Transverse colon (tissue), 4 donors: ENCODE measurements at regions of chr11 and their contacts with region 1.

Region 1: GRCh38 chr11:134749040-134749839 is 337.2 kb upstream of the B3GAT1 start:
- DNase-seq: no peak
- H3K4me3 ChIP-seq: no peak overlapping the region
- H3K27ac ChIP-seq: no peak overlapping the region
- H3K4me1 ChIP-seq: no peaks in the 10 kb centered on the region
- H3K27me3 ChIP-seq: peaks cover 14% of the 10 kb centered on the region
- CTCF ChIP-seq: no peak
- EP300 ChIP-seq: no peak
- POLR2A ChIP-seq: no peak

Region 2: DNA sequence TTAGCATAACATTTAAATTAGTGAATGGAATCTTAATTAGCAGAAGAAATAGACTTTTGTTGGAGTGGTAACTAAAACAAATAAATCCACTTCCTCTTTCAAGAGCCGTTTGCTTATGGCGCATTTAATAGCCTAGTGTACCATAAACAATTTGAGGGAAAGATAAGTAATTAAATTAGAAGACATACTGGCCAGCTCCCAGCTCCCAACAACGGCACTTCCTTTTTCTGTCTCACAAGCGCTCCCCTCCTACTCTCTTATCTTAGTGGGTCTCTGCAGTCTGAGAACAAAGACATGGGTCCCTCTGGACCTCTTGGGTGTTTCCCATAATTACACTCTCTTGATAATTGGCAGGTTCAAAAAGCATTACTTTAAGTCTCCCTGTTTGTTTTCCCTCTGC is 1363.0 kb before region 1 on chr11:
- in situ Hi-C with region 1: no loop called
- intact Hi-C with region 1: loop called (anchors 5 kb)
- DNase-seq: no peak
- H3K4me3 ChIP-seq: no peak overlapping the region
- H3K27ac ChIP-seq: no peak overlapping the region
- H3K4me1 ChIP-seq: peaks cover 0 to 11% (median 2%) of the 10 kb centered on the region in 4 donors
- H3K27me3 ChIP-seq: no peaks in the 10 kb centered on the region
- CTCF ChIP-seq: no peak
- EP300 ChIP-seq: no peak
- POLR2A ChIP-seq: no peak

Region 3: DNA sequence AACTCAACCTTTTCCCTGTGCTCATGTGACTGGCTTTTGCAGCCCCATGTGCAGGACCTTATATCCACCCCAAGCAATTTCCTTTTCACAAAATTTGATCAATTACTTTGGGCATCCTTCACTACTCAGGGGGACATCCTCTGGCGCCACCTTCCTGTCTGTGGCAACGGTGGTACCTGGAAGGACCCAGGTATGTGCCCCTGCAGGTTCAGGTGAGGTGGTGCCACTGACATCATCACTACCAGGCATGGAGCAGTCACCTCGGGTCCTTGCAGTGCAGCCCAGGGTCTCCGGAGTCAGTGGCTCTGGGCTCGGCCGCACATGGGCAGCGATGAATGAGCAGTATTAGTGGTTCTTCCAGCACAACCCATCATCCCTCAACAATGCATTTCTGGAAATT is 299.5 kb before region 1 on chr11:
- in situ Hi-C with region 1: no loop called
- intact Hi-C with region 1: no loop called
- DNase-seq: no peak
- H3K4me3 ChIP-seq: no peak overlapping the region
- H3K27ac ChIP-seq: no peak overlapping the region
- H3K4me1 ChIP-seq: no peaks in the 10 kb centered on the region
- H3K27me3 ChIP-seq: no peaks in the 10 kb centered on the region
- CTCF ChIP-seq: peak in 1 of 5 experiments; percentile 18
- EP300 ChIP-seq: no peak
- POLR2A ChIP-seq: no peak